Activated CD4-positive, alpha-beta T cell treated with anti-CD3 and anti-CD28 coated beads for 36 hours (primary cell): ENCODE measurements at regions of chr7 and their contacts with region 1.

Region 1: DNA sequence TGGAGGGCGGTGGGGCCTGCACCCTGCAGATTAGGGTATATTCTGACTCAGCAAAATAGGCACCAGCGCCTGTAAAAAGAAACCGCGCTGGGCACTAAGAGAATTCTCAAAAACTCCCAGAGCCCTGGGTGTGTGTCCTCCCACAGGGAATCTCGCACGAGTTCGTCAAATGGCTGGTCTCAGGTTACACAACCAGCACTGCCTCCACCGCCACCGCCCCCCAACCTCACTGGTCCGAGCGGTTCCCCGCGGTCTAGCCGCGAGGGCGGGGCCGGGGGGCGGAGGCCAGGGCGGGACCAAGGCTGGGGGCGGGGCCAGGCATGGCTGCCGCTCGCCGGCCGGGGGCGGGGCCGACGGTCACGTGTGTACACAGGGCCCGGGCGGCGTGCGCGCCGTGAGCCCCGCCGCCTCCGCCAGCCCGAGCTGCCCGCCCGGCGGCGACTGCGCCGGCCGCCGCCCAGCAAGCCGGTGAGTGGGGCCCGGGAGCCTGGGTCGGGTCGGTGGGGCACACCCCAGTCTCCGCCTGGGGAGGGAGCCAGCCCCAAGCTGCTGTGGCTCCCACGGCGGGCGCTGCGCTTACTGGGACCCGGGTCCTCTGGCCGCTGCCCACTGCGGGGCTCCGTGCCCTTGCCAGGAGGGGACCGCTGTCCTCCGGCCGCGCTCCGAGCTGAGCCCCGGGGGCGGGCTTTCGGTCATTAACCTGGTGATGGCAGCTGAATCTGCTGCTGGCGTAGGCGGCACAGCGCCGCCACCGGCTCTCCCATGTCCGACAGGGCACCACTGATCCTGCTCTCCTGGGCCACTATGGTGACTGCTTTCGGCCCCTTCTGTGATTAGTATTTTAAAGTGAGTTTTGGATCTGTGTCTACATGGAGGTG is at the start of gene GPR146:
- DNase-seq: peak; percentile 96
- ATAC-seq: peak; percentile 88
- H3K4me3 Mint-ChIP-seq: peak within 1 kb of the TSS; percentile 78
- H3K27ac Mint-ChIP-seq: peak within 1 kb of the TSS; percentile 73
- H3K4me1 Mint-ChIP-seq: peaks cover 61% of the 10 kb centered on the region
- H3K27me3 Mint-ChIP-seq: no peaks in the 10 kb centered on the region
- total RNA-seq, gene GPR146: 4.7 to 5.6 TPM

Region 2: DNA sequence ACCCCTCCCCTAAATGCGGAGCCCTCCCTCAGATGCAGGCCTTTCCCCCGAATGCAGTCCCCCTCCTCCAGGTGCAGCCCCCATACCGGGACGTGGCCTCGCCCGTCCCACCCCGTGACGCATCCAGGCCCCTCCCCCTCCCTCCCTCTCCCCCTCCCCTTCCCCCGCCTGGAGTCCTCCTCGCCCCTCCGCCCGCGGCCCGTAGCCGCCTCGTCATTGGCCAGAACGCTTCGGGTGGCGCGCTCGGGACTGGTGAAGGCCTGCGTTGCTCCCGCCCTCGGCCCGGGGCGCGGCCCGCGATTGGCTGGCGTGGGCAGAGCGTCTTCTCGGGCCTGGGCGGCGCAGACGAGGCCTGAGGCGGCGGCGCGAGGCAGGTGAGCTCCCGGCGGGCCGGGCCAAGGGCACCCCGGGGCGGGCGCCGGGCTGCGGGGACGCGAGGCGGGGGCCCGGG is 228.1 kb before region 1 on chr7:
- CTCF ChIA-PET with region 1: no interaction called
- POLR2A ChIA-PET with region 1: no interaction called
- intact Hi-C with region 1: loop called in 1 of 2 experiments (anchors 5 kb)
- DNase-seq: peak; percentile 99
- ATAC-seq: peak; percentile 97
- H3K4me3 Mint-ChIP-seq: peak overlapping the region; percentile 60
- H3K27ac Mint-ChIP-seq: no peak overlapping the region
- H3K4me1 Mint-ChIP-seq: peaks cover 62% of the 10 kb centered on the region
- H3K27me3 Mint-ChIP-seq: peaks cover 6% of the 10 kb centered on the region

Region 3: GRCh38 chr7:1137510-1138167 is 93.2 kb after region 1 on chr7:
- CTCF ChIA-PET with region 1: no interaction called
- POLR2A ChIA-PET with region 1: no interaction called
- intact Hi-C with region 1: loop called in 1 of 2 experiments (anchors 5 kb)
- DNase-seq: no peak
- ATAC-seq: peak; percentile 54
- H3K4me3 Mint-ChIP-seq: peak overlapping the region; percentile 75
- H3K27ac Mint-ChIP-seq: peak overlapping the region; percentile 69
- H3K4me1 Mint-ChIP-seq: peaks cover 21% of the 10 kb centered on the region
- H3K27me3 Mint-ChIP-seq: no peaks in the 10 kb centered on the region

Region 4: DNA sequence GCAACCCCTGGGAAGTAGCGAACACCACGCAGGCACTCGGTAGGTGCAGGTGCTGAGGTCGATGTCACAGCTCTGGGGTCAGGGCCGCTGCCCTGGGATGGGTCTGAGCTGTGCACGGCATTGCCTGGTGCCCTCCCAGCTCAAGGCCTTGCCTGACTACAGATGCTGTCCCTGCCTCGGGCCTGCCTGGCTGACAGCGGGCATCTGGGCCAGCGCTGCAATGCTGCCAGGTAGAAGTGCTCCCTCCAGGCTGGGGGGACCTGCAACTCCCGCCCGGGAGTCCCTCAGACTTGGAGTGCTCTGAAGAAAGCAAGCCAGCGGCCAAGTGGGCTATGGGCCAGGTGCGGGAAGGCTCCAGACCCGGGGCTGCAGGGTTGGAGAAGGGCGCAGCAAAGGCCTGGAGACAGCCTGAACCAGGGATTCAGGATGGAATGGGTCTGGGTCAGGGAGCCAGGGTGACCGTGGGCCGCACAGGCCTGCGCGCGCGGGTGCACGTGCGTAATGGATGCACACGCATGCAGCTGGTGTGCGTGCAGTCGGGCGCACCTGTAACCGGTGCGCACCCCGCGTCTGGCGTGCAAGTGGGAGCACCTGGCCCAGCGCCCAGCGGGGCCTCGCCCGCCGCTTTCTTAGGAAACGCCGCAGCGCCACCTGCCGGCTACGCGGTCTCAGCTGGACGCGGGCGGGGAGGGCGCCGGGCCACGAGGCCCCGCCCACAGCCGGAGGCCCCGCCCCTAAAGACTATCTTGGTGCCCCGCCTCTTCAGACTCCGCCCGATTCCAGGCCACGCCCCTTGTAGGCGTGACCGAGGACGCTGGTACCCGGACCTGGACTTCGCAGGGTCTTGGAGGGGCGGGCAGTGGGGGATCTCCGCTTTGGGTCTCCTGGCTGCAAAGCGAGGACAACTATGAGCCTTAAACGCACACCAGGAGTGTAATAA is 368.2 kb after region 1 on chr7:
- CTCF ChIA-PET with region 1: no interaction called
- POLR2A ChIA-PET with region 1: no interaction called
- intact Hi-C with region 1: loop called in 1 of 2 experiments (anchors 5 kb)
- DNase-seq: peak; percentile 97
- ATAC-seq: peak; percentile 82
- H3K4me3 Mint-ChIP-seq: no peak overlapping the region
- H3K27ac Mint-ChIP-seq: no peak overlapping the region
- H3K4me1 Mint-ChIP-seq: peaks cover 14% of the 10 kb centered on the region
- H3K27me3 Mint-ChIP-seq: peaks cover 5% of the 10 kb centered on the region

Region 5: DNA sequence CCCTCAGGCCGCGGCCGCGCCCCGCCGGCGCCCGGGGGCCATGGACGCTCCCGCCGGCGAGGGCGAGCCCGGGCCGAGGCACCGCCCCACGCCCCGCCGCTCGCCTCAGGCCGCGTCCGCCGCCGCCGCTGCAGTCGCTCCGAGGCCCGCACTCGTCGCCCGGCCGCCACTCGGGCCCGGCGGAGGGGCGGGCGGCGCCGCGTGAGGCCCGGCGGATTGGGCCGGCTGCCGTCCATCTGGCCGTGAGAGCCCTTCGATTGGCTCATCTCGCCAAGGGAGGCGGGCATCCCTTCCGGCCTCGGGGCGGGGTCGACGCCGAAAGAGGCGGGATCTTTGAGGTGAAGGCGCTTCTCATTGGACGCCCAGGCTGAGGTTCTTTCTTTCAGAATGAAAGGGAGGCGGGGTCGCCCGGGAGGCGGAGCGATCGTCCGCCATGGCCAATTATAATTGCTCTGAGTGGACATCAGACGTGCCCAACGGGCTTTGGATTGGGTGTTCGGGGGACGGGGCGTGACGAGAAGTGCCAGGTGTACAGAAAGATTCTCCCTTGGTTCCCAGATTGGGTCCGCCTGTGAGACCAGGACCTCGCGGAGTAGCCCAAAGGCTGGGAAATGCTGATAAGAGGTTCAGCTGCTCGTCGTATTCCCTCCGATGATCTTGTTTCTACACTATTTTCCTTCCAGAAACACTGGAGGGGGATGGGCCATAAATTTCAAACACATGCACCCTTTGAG is 1799.9 kb after region 1 on chr7 and contains the start of gene GNA12:
- CTCF ChIA-PET with region 1: no interaction called
- POLR2A ChIA-PET with region 1: no interaction called
- intact Hi-C with region 1: loop called in 1 of 2 experiments (anchors 5 kb)
- DNase-seq: peak; percentile 99
- ATAC-seq: peak; percentile 96
- H3K4me3 Mint-ChIP-seq: peak within 1 kb of the TSS; percentile 75
- H3K27ac Mint-ChIP-seq: peak within 1 kb of the TSS; percentile 44
- H3K4me1 Mint-ChIP-seq: peaks cover 23% of the 10 kb centered on the region
- H3K27me3 Mint-ChIP-seq: no peaks in the 10 kb centered on the region
- total RNA-seq, gene GNA12: 19.5 to 22.6 TPM